ENCODE measurements at regions of chr3 and their contacts with region 1.

Region 1: GRCh38 chr3:138915503-138916498 is 31.1 kb downstream of the FOXL2 start:
- DNase-seq: peak; percentile 96
- ATAC-seq: peak; percentile 97 to 98

Region 2: GRCh38 chr3:138694287-138695007 is 221.4 kb before region 1 on chr3:
- intact Hi-C with region 1: loop called (anchors 2 to 5 kb)
- DNase-seq: no peak
- ATAC-seq: peak in 1 of 2 donors; percentile 94

Region 3: DNA sequence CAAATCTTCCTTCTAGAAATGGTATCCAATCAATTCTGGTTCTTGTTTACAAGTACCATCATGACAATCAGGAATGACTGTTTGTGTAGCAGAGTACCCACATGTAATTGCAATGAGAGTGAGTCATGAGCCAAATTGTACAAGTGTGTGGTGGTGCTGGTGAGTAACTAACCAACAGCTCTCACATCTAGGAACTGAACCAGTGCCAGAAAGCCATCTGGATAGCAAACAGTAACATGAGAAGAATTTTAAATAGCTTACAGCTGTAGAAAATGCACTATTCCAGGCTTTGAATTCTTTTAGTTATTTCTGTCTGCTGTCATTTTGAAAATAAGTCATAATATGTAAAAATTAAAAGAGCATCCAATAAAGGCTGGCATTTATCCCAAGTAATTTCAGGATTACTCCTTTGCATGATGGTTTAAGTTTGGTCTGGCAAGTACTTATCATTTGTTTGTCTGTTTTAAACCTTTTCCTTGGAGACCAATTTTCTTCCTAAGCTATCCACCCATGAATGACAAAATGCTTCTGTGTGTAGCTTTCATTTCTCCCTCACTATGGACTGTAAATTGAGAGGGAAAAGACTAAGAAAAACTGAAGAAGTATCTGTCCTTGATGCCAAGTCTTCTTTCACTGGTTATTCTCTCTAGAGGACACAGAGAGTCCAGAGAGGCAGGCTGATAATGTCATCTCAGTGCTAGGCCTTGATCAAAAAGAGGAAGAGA is 141.1 kb before region 1 on chr3:
- intact Hi-C with region 1: loop called in 1 of 2 experiments (anchors 10 kb)
- DNase-seq: peak; percentile 58
- ATAC-seq: peak; percentile 89 to 97

Region 4: GRCh38 chr3:138834359-138835212 is 81.2 kb before region 1 on chr3 and contains the start of gene PIK3CB:
- intact Hi-C with region 1: loop called (anchors 2 to 5 kb)
- DNase-seq: peak; percentile 95
- ATAC-seq: peak; percentile 98 to 100
- total RNA-seq, gene PIK3CB: 29.0 to 32.2 TPM

Measured in left cardiac atrium (tissue), 4 donors.